ENCODE measurements at regions of chr7 and their contacts with region 1.

Region 1: GRCh38 chr7:34133983-34134782 is 228.8 kb downstream of the BMPER start:
- DNase-seq: peak; percentile 75
- H3K4me3 ChIP-seq: peak overlapping the region in 2 of 3 experiments; percentile 30 to 32
- H3K27ac ChIP-seq: peak overlapping the region; percentile 98
- H3K4me1 ChIP-seq: peaks cover 26% of the 10 kb centered on the region
- H3K27me3 ChIP-seq: no peaks in the 10 kb centered on the region
- CTCF ChIP-seq: peak; percentile 83 to 84

Region 2: DNA sequence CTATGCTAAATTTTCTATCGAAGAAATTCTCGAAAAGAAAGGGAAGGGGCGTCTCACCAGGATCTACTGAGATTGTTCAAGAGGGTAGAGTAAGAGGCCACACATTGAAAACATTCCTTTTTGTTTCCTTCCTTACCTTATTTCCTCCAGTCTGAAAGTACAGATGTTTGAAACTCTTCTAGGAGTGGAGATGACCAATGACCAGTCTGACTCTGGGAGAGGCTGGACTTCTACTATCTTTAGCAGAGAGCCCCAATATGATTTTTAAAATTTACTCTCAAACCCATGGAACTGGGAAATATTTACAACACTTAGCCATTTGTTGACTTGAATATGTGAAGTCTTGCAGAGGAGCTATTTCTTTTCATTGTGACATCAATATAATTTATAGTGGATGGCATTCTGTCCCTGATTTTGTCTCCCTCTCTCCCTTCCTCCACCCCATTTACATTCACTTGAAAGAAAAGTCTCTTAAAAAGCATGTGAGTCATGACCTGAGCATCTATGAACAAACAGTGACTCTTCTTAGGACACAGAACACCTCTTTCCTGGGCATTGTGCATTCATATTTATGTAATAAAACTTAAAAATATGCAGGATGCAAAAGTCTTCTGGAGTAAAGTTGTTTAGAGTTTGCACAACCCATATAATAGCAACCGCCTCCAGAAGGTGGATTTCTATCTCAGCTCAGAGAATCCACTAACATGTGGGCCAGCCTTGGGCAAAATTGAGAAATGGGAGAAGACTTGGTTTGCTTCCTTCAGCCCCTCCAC is 260.0 kb before region 1 on chr7:
- CTCF ChIA-PET with region 1: no interaction called
- dilution Hi-C with region 1: no loop called
- in situ Hi-C with region 1: no loop called
- intact Hi-C with region 1: no loop called
- DNase-seq: peak; percentile 84
- H3K4me3 ChIP-seq: no peak overlapping the region
- H3K27ac ChIP-seq: peak overlapping the region; percentile 45
- H3K4me1 ChIP-seq: peaks cover 23% of the 10 kb centered on the region
- H3K27me3 ChIP-seq: no peaks in the 10 kb centered on the region
- CTCF ChIP-seq: no peak

Region 3: DNA sequence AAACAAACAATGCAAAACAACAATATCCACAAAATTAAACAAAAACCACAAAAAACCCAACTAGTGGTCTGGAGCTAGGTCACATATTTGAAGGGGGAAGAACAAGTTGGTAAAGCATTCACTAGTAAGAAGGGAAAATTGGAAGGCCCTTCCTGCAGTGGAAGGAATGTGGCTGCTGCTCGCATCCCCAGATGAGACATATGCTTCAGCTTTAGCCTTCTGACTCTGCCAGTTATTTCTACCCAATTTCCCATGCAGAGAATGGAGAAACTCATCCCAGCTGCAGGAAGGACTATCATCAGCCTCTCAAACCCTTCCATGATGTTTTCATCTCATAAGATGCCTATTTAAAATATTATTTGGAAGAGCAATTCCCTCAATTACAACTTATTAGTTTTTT is 52.2 kb before region 1 on chr7:
- CTCF ChIA-PET with region 1: no interaction called
- dilution Hi-C with region 1: no loop called
- in situ Hi-C with region 1: no loop called
- intact Hi-C with region 1: no loop called
- DNase-seq: no peak
- H3K4me3 ChIP-seq: no peak overlapping the region
- H3K27ac ChIP-seq: no peak overlapping the region
- H3K4me1 ChIP-seq: no peaks in the 10 kb centered on the region
- H3K27me3 ChIP-seq: no peaks in the 10 kb centered on the region
- CTCF ChIP-seq: no peak

Region 4: DNA sequence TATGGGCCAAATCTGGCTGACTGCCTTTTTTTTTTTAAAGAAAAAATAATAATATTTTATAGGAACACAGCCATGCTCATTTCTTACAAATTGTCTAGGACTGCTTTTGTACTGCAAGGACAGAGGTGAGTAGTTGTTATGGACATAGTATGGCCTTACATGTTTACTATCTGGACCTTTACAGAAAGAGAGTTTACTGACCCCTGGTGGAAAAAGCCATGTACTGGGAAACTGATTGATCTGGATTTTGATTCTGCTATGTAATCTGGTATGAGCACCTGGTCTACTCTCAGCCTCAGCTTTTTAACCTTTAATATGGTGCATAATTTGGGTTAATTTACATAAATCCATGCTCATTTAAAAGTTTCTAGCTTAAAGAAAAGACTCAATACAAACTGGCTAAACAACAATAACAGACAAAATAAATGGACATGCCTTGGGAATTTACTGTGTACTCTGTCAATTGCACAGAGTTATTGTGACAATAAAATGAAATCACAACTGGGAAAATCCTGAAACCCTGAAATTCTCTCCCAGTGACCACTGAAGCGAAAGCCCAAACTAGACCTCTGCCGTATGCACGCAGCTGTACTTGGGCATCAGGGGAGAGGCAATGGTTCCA is 31.9 kb after region 1 on chr7:
- CTCF ChIA-PET with region 1: no interaction called
- dilution Hi-C with region 1: no loop called
- in situ Hi-C with region 1: no loop called
- intact Hi-C with region 1: loop called (anchors 1 kb)
- DNase-seq: peak; percentile 33
- H3K4me3 ChIP-seq: no peak overlapping the region
- H3K27ac ChIP-seq: no peak overlapping the region
- H3K4me1 ChIP-seq: no peaks in the 10 kb centered on the region
- H3K27me3 ChIP-seq: no peaks in the 10 kb centered on the region
- CTCF ChIP-seq: peak; percentile 50 to 77

Region 5: GRCh38 chr7:34260279-34260678 is 126.1 kb after region 1 on chr7:
- CTCF ChIA-PET with region 1: no interaction called
- dilution Hi-C with region 1: no loop called
- in situ Hi-C with region 1: no loop called
- intact Hi-C with region 1: loop called (anchors 10 kb)
- DNase-seq: peak; percentile 93
- H3K4me3 ChIP-seq: no peak overlapping the region
- H3K27ac ChIP-seq: peak overlapping the region; percentile 32
- H3K4me1 ChIP-seq: peaks cover 10% of the 10 kb centered on the region
- H3K27me3 ChIP-seq: no peaks in the 10 kb centered on the region
- CTCF ChIP-seq: no peak

Region 6: DNA sequence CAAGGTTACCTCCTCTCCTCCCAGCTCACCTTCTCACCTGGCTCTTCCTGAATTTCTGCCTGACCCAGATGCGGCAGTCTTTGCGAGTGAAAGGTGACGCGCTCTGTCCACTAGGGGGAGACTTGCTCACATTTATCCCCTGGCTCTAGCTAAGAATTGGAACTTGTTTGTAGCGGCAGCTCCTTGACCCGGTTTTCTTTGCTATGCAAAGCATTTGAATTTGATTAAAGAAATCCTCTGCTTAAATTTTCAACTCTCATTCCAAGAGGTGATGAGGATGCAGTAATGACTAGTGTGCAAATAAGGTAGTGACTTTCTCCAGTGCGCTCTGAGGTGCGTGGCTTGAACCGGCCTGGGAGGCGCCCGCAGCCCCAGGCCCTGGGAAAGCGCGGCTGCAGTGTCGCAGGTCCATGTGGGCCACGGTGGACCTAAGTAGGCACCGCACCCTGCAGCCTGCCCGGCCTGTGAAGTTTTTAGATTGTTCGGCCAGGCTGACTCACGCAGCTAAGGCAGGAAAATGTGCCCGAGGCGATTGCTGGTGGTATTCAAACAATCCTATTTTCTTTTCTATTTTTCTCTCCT is 186.9 kb after region 1 on chr7:
- CTCF ChIA-PET with region 1: interaction called, 4 read pairs
- dilution Hi-C with region 1: no loop called
- in situ Hi-C with region 1: no loop called
- intact Hi-C with region 1: loop called (anchors 1 kb)
- DNase-seq: peak; percentile 73
- H3K4me3 ChIP-seq: peak overlapping the region; percentile 34 to 42 (median 35)
- H3K27ac ChIP-seq: peak overlapping the region; percentile 49
- H3K4me1 ChIP-seq: peaks cover 19% of the 10 kb centered on the region
- H3K27me3 ChIP-seq: no peaks in the 10 kb centered on the region
- CTCF ChIP-seq: peak; percentile 86 to 92

Region 7: GRCh38 chr7:34430458-34430857 is 296.3 kb after region 1 on chr7:
- CTCF ChIA-PET with region 1: no interaction called
- dilution Hi-C with region 1: no loop called
- in situ Hi-C with region 1: no loop called
- intact Hi-C with region 1: loop called (anchors 1 kb)
- DNase-seq: peak; percentile 55
- H3K4me3 ChIP-seq: no peak overlapping the region
- H3K27ac ChIP-seq: no peak overlapping the region
- H3K4me1 ChIP-seq: no peaks in the 10 kb centered on the region
- H3K27me3 ChIP-seq: no peaks in the 10 kb centered on the region
- CTCF ChIP-seq: peak; percentile 85 to 93

Region 8: DNA sequence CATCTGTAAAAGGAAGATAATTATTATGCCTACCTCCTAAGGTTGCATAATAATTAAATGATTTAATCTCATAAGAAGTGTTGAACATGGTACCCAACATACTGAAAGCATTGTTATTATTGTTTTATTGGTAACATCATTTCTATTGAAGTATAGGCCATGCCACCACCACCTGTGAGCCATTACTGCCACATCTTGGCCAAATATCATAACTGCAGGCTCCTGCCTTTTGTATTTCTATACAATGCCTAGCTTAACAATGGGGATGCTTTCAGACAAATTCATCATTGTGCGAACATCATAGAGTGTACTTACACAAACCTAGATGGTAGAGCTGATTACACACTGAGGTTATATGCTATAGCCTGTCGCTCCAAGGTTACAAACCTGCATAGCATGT is 462.7 kb after region 1 on chr7:
- CTCF ChIA-PET with region 1: no interaction called
- dilution Hi-C with region 1: no loop called
- in situ Hi-C with region 1: no loop called
- intact Hi-C with region 1: loop called (anchors 1 kb)
- DNase-seq: peak; percentile 16
- H3K4me3 ChIP-seq: no peak overlapping the region
- H3K27ac ChIP-seq: no peak overlapping the region
- H3K4me1 ChIP-seq: no peaks in the 10 kb centered on the region
- H3K27me3 ChIP-seq: no peaks in the 10 kb centered on the region
- CTCF ChIP-seq: peak; percentile 72 to 74

Region 9: GRCh38 chr7:35037526-35038339 is 903.5 kb after region 1 on chr7:
- CTCF ChIA-PET with region 1: no interaction called
- dilution Hi-C with region 1: no loop called
- in situ Hi-C with region 1: no loop called
- intact Hi-C with region 1: loop called (anchors 5 kb)
- DNase-seq: peak; percentile 88
- H3K4me3 ChIP-seq: peak overlapping the region; percentile 43 to 82 (median 78)
- H3K27ac ChIP-seq: peak overlapping the region; percentile 41
- H3K4me1 ChIP-seq: peaks cover 22% of the 10 kb centered on the region
- H3K27me3 ChIP-seq: no peaks in the 10 kb centered on the region
- CTCF ChIP-seq: peak; percentile 57 to 83